ENCODE measurements at regions of chr1 and their contacts with region 1.

Region 1: GRCh38 chr1:206635080-206635977 is at the start of gene DYRK3:
- DNase-seq: peak; percentile 93
- H3K4me3 Mint-ChIP-seq: peak within 1 kb of the TSS; percentile 83
- H3K27ac Mint-ChIP-seq: peak within 1 kb of the TSS; percentile 92
- H3K4me1 Mint-ChIP-seq: peaks cover 27% of the 10 kb centered on the region
- H3K27me3 Mint-ChIP-seq: peaks cover 21% of the 10 kb centered on the region
- total RNA-seq, gene DYRK3: 6.5 to 6.7 TPM

Region 2: DNA sequence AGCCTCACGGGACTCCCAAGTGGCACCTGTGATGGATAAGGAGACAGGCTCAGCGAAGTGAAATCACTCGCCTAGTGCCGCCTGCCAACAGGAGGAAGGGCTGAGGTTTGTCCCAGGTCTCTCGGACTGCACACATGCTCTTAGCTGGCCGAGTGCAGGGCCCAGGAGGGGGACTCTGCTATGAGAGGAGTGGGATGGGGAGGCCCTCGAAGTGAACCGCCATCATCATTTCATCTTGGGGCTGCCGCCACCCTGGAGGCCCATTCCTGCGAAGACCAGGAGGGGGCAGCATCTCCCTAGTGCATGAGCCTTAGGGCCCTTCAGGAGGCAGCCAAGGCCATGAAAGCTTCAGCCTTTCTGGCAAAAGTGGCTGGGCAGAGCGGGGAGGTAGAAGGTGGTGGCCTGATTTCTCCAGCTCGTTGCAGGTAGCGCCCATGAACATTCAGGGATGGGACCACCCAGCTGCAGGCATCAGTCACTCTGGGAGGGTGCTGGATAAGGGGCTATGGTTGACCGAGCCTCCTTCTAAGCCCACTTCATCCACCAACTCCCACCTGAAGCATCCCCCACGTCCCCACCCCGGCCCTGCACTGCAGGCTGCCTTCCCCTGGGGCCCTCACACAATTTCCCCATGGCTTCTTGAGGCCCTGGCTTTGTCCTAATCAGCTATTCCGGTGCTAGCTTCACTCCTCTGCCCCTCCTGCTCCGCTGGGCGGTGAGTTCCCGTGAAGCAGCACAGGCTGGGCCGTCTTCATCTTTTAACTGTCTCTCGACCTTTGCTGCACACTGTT is 145.2 kb before region 1 on chr1:
- CTCF ChIA-PET with region 1: interaction called, 7 read pairs
- intact Hi-C with region 1: loop called (anchors 1 kb)
- DNase-seq: peak; percentile 87
- H3K4me3 Mint-ChIP-seq: no peak overlapping the region
- H3K27ac Mint-ChIP-seq: no peak overlapping the region
- H3K4me1 Mint-ChIP-seq: no peaks in the 10 kb centered on the region
- H3K27me3 Mint-ChIP-seq: no peaks in the 10 kb centered on the region

Region 3: DNA sequence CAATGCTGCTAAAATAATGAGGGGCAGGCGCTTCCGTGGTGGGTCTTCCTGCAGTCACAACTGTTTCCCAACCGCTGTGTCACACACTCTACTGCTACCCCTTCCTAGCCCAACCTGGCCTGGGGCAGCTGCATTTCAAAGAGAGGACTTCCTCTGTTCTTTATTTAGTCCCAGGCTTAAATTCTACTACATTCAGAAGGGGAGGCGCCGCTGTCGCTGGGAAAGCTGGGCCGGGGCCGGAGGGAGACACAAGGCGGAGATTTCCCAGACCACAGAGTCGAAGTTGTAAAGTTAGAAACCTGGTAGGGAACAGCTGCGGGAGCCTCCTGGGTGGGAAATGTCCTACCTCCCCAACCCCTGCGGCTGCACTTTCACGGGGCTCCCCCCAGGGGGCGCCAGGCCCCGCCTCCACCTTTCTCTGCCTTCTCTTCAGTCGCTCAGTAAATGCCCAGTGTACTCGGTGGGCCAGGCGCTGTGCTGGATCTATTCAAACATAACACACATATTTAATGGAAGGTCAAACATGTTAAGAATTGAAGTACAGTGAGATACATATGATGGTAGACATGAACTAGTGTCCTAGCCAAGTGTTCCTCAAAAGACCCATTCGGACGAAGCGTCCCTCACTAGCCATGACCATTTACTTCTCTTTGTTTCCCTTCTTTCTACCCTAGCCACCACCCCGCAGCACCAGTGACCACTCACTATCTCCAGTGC is 23.1 kb after region 1 on chr1:
- CTCF ChIA-PET with region 1: interaction called, 133 read pairs
- intact Hi-C with region 1: no loop called
- DNase-seq: peak; percentile 69
- H3K4me3 Mint-ChIP-seq: no peak overlapping the region
- H3K27ac Mint-ChIP-seq: no peak overlapping the region
- H3K4me1 Mint-ChIP-seq: peaks cover 33% of the 10 kb centered on the region
- H3K27me3 Mint-ChIP-seq: peaks cover 24% of the 10 kb centered on the region

Region 4: GRCh38 chr1:206684478-206685333 is 49.4 kb after region 1 on chr1 and contains the start of gene MAPKAPK2:
- CTCF ChIA-PET with region 1: interaction called, 5 read pairs
- intact Hi-C with region 1: loop called (anchors 1 kb)
- DNase-seq: peak; percentile 75
- H3K4me3 Mint-ChIP-seq: peak within 1 kb of the TSS; percentile 88
- H3K27ac Mint-ChIP-seq: peak within 1 kb of the TSS; percentile 91
- H3K4me1 Mint-ChIP-seq: peaks cover 52% of the 10 kb centered on the region
- H3K27me3 Mint-ChIP-seq: peaks cover 2% of the 10 kb centered on the region
- total RNA-seq, gene MAPKAPK2: 83.4 to 85.3 TPM

Region 5: GRCh38 chr1:206725109-206725963 is 90.0 kb after region 1 on chr1:
- CTCF ChIA-PET with region 1: interaction called, 3 read pairs
- intact Hi-C with region 1: loop called (anchors 1 kb)
- DNase-seq: peak; percentile 84
- H3K4me3 Mint-ChIP-seq: no peak overlapping the region
- H3K27ac Mint-ChIP-seq: no peak overlapping the region
- H3K4me1 Mint-ChIP-seq: peaks cover 39% of the 10 kb centered on the region
- H3K27me3 Mint-ChIP-seq: no peaks in the 10 kb centered on the region